Gastrocnemius medialis (tissue), 4 donors: ENCODE measurements at regions of chr13 and their contacts with region 1.

Region 1: DNA sequence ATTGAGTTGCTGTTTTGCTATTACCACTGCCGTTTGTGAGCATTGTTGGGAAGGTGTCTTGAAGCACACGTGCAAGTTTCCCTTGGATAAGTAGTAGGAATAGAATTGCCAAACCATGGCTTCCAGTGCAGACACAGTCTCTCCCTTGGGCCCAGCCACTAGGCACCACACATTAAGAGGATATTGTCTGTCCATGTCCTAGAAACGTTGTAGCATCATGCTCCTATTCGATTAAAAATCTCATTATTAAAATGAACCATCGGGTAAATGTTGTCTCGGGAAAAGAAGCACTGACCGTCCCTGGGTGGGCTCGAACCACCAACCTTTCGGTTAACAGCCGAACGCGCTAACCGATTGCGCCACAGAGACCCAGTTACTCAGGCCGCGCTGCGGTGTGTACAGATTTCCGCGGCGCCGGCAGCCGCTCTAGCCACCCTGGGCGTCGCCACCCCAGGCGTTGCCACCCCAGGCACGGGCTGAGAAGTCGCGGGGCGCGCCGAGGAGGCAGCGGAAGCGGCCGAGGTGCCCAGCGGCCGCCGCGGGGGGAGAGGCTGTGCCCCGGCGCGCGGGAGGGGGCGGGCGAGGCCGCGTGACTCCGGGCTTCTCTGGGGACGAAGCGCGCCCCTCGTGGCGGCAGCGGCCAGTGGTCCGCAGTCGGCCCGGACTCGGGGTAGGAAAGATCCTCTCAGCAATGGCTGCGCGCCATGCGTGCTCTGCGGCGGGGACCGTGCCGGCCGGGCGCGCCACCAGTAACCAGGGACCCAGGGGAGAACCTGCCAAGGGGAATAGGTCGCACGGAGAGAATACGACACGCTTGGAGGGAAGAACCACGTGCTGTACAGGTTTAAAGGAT is 56.2 kb downstream of the USPL1 start:
- DNase-seq: peak; percentile 61 to 83
- ATAC-seq: peak; percentile 79 to 86
- H3K4me3 ChIP-seq: peak overlapping the region; percentile 53 to 63 (median 56)
- H3K27ac ChIP-seq: peak overlapping the region; percentile 72 to 79 (median 74)
- H3K4me1 ChIP-seq: peaks cover 4 to 5% of the 10 kb centered on the region in 2 donors
- H3K27me3 ChIP-seq: no peaks in the 10 kb centered on the region
- CTCF ChIP-seq: peak; percentile 62 to 80 (median 70)
- POLR2A ChIP-seq: no peak

Region 2: DNA sequence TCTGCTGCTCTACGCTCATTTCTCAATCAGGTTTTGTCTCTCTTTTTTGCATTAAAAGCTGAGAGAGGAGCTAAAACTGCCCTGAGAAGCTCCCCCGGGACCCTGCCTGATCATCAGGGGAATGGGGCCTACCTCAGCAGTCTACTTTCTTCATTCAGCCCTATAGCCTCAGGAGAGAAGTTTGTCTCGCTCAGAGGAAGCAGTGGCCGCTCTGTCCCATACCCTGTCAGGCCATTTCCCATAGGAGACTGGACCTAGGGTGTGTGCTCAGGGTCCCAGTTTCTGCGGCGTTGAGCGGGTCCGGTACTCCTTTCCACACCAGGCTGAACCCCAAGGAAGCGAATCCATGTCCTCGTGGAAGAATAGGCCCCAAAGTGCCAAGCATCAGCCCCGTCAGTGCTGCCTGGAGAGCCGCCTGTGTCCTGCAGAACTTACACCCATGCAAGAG is 229.9 kb before region 1 on chr13:
- in situ Hi-C with region 1: no loop called
- intact Hi-C with region 1: no loop called
- DNase-seq: no peak
- ATAC-seq: no peak
- H3K4me3 ChIP-seq: no peak overlapping the region
- H3K27ac ChIP-seq: no peak overlapping the region
- H3K4me1 ChIP-seq: peaks cover 12 to 15% of the 10 kb centered on the region in 2 donors
- H3K27me3 ChIP-seq: no peaks in the 10 kb centered on the region
- CTCF ChIP-seq: no peak
- POLR2A ChIP-seq: no peak

Region 3: GRCh38 chr13:30752201-30752797 is 78.4 kb after region 1 on chr13:
- in situ Hi-C with region 1: no loop called
- intact Hi-C with region 1: loop called (anchors 2 kb)
- DNase-seq: peak; percentile 56 to 74
- ATAC-seq: peak; percentile 96 to 97
- H3K4me3 ChIP-seq: no peak overlapping the region
- H3K27ac ChIP-seq: peak overlapping the region; percentile 83 to 91 (median 87)
- H3K4me1 ChIP-seq: peaks cover 34 to 45% of the 10 kb centered on the region in 2 donors
- H3K27me3 ChIP-seq: no peaks in the 10 kb centered on the region
- CTCF ChIP-seq: no peak
- POLR2A ChIP-seq: no peak

Region 4: GRCh38 chr13:31044377-31045285 is 370.7 kb after region 1 on chr13:
- in situ Hi-C with region 1: no loop called
- intact Hi-C with region 1: loop called (anchors 10 kb)
- DNase-seq: peak; percentile 33 to 52
- ATAC-seq: peak; percentile 65 to 80
- H3K4me3 ChIP-seq: no peak overlapping the region
- H3K27ac ChIP-seq: no peak overlapping the region
- H3K4me1 ChIP-seq: peaks cover 0 to 4% of the 10 kb centered on the region in 2 donors
- H3K27me3 ChIP-seq: peaks cover 0 to 3% (median 0%) of the 10 kb centered on the region in 3 donors
- CTCF ChIP-seq: peak; percentile 50 to 92 (median 72)
- POLR2A ChIP-seq: no peak

Region 5: GRCh38 chr13:32045982-32046785 is 1372.3 kb after region 1 on chr13:
- in situ Hi-C with region 1: no loop called
- intact Hi-C with region 1: no loop called
- DNase-seq: no peak
- ATAC-seq: no peak
- H3K4me3 ChIP-seq: no peak overlapping the region
- H3K27ac ChIP-seq: no peak overlapping the region
- H3K4me1 ChIP-seq: peaks cover 13 to 15% of the 10 kb centered on the region in 2 donors
- H3K27me3 ChIP-seq: no peaks in the 10 kb centered on the region
- CTCF ChIP-seq: no peak
- POLR2A ChIP-seq: no peak